ENCODE measurements at regions of chr11 and their contacts with region 1.

Region 1: GRCh38 chr11:1382831-1383607 is 6.7 kb upstream of the BRSK2 start:
- DNase-seq: peak; percentile 59 to 91 (median 78)
- ATAC-seq: peak; percentile 79
- H3K4me3 ChIP-seq: peak overlapping the region; percentile 67 to 83
- H3K4me3 Mint-ChIP-seq: peak overlapping the region; percentile 75
- H3K27ac ChIP-seq: peak overlapping the region; percentile 70 to 94
- H3K27ac Mint-ChIP-seq: peak overlapping the region; percentile 57
- H3K4me1 ChIP-seq: peaks cover 4% of the 10 kb centered on the region
- H3K4me1 Mint-ChIP-seq: peaks cover 8% of the 10 kb centered on the region
- H3K27me3 ChIP-seq: no peaks in the 10 kb centered on the region
- H3K27me3 Mint-ChIP-seq: no peaks in the 10 kb centered on the region
- CTCF ChIP-seq: no peak

Region 2: DNA sequence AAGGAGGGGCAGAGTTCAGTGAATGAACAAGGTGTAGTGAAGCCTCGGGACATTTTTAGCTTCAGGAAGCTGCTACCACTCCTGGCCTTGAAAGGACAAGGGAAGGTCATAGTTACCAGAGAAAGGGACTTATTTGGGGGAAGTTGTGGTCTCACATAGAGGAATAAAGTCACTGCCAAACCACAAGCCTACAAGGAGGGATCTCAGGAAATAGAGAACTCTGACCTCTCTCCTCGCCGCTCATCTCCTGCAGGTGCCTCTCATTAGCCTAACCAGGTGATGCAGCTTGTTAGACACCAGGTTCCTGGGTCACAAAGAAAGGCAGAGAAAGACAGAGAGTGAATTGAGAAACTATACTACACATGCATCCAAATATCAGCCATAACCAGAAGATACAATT is 59.2 kb before region 1 on chr11:
- CTCF ChIA-PET with region 1: no interaction called
- POLR2A ChIA-PET with region 1: no interaction called
- intact Hi-C with region 1: no loop called
- DNase-seq: peak in 1 of 9 experiments; percentile 5
- ATAC-seq: no peak
- H3K4me3 ChIP-seq: no peak overlapping the region
- H3K4me3 Mint-ChIP-seq: no peak overlapping the region
- H3K27ac ChIP-seq: no peak overlapping the region
- H3K27ac Mint-ChIP-seq: no peak overlapping the region
- H3K4me1 ChIP-seq: no peaks in the 10 kb centered on the region
- H3K4me1 Mint-ChIP-seq: peaks cover 4% of the 10 kb centered on the region
- H3K27me3 ChIP-seq: no peaks in the 10 kb centered on the region
- H3K27me3 Mint-ChIP-seq: peaks cover 32% of the 10 kb centered on the region
- CTCF ChIP-seq: no peak

Region 3: GRCh38 chr11:1335811-1336761 is 46.9 kb before region 1 on chr11:
- CTCF ChIA-PET with region 1: no interaction called
- POLR2A ChIA-PET with region 1: no interaction called
- intact Hi-C with region 1: loop called (anchors 2 kb)
- DNase-seq: peak in 8 of 9 experiments; percentile 50 to 85 (median 66)
- ATAC-seq: peak; percentile 69
- H3K4me3 ChIP-seq: peak overlapping the region; percentile 45 to 60
- H3K4me3 Mint-ChIP-seq: peak overlapping the region; percentile 80
- H3K27ac ChIP-seq: peak overlapping the region in 1 of 2 experiments; percentile 19
- H3K27ac Mint-ChIP-seq: peak overlapping the region; percentile 71
- H3K4me1 ChIP-seq: peaks cover 12% of the 10 kb centered on the region
- H3K4me1 Mint-ChIP-seq: peaks cover 18% of the 10 kb centered on the region
- H3K27me3 ChIP-seq: no peaks in the 10 kb centered on the region
- H3K27me3 Mint-ChIP-seq: no peaks in the 10 kb centered on the region
- CTCF ChIP-seq: no peak

Measured in CD8-positive, alpha-beta T cell (primary cell).